ENCODE measurements at regions of chr2 and their contacts with region 1.

Region 1: GRCh38 chr2:120680136-120680761 is 55.4 kb upstream of the GLI2 start:
- DNase-seq: peak; percentile 87
- H3K4me3 Mint-ChIP-seq: no peak overlapping the region
- H3K27ac Mint-ChIP-seq: no peak overlapping the region
- H3K4me1 Mint-ChIP-seq: peaks cover 2% of the 10 kb centered on the region
- H3K27me3 Mint-ChIP-seq: peaks cover 15% of the 10 kb centered on the region

Region 2: DNA sequence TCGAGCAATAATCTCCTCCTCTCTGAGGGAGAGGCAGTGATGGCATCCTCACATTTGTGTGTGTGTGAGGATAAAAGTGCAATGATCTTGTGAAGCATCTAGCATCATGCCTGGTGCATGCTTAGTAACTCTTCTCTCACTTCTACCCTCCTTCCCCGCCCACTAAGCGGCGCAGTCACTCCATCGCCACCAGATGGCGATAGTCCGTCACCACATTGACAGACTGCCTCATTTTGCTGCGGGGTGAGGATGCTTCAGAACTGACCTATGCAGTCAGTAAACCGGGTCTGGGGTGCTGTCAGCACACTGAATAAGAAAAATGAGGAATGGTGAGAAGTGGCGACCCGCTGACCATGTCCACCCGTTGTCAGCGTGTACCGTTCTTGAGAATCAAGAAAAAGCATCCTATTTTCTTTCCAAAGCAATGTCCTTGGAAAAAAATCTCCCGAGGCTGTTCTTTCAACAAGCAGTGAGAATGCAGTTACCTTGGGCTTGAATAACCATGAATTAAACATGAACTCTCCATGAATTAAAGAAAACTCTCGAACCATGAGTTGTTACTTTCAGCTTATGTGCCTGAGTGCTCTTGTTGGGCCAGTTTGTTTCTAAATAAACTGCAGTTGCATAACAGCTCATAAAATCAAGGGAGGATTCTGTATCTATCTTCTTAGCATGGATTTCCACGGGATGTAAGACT is 1038.5 kb before region 1 on chr2:
- CTCF ChIA-PET with region 1: no interaction called
- intact Hi-C with region 1: loop called (anchors 1 kb)
- DNase-seq: peak; percentile 84
- H3K4me3 Mint-ChIP-seq: no peak overlapping the region
- H3K27ac Mint-ChIP-seq: no peak overlapping the region
- H3K4me1 Mint-ChIP-seq: peaks cover 1% of the 10 kb centered on the region
- H3K27me3 Mint-ChIP-seq: no peaks in the 10 kb centered on the region

Region 3: GRCh38 chr2:119753041-119753929 is 927.0 kb before region 1 on chr2:
- CTCF ChIA-PET with region 1: no interaction called
- intact Hi-C with region 1: loop called (anchors 5 kb)
- DNase-seq: peak; percentile 43
- H3K4me3 Mint-ChIP-seq: no peak overlapping the region
- H3K27ac Mint-ChIP-seq: no peak overlapping the region
- H3K4me1 Mint-ChIP-seq: peaks cover 14% of the 10 kb centered on the region
- H3K27me3 Mint-ChIP-seq: no peaks in the 10 kb centered on the region

Region 4: GRCh38 chr2:120231974-120232635 is 448.1 kb before region 1 on chr2:
- CTCF ChIA-PET with region 1: no interaction called
- intact Hi-C with region 1: loop called (anchors 5 kb)
- DNase-seq: peak; percentile 86
- H3K4me3 Mint-ChIP-seq: peak overlapping the region; percentile 82
- H3K27ac Mint-ChIP-seq: peak overlapping the region; percentile 94
- H3K4me1 Mint-ChIP-seq: peaks cover 47% of the 10 kb centered on the region
- H3K27me3 Mint-ChIP-seq: no peaks in the 10 kb centered on the region

Region 5: GRCh38 chr2:120320318-120320851 is 359.9 kb before region 1 on chr2:
- CTCF ChIA-PET with region 1: no interaction called
- intact Hi-C with region 1: no loop called
- DNase-seq: no peak
- H3K4me3 Mint-ChIP-seq: no peak overlapping the region
- H3K27ac Mint-ChIP-seq: no peak overlapping the region
- H3K4me1 Mint-ChIP-seq: peaks cover 4% of the 10 kb centered on the region
- H3K27me3 Mint-ChIP-seq: no peaks in the 10 kb centered on the region

Region 6: DNA sequence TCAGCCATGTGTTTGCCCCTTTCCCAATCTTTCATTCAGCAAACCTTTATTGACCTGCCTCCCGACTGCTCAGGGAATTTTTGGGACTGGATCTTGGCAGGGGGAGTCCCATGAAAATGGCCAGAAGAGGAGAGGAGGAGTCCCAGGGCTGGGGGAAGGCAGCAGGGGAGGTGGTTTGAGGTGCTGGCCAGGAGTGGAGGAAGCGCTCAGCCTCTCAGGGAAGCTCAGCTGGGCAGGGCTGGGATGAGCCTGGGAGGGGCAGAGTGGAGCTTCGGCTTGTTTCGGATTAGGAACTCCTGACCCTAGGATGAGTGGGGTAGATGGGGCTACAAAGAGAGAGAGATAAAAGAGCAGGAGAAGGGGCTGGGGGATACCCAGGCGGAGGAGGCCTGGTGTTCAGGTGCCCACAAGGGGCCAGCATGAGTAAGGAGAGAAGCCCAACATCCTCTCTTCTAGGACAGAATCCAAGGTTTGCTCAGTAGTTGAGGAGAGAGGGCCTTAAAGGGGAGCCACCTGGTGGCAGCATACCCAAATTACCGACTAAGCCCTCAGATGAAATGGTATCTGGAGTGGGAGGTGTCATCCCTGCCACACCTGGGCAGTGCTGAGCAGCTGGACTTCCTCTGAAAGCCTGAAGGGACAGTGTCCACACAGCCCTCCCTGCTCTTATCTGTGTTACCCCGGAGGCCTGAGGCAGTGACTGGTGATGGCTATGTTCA is 243.2 kb before region 1 on chr2:
- CTCF ChIA-PET with region 1: interaction called, 5 read pairs
- intact Hi-C with region 1: loop called (anchors 5 kb)
- DNase-seq: peak; percentile 50
- H3K4me3 Mint-ChIP-seq: no peak overlapping the region
- H3K27ac Mint-ChIP-seq: no peak overlapping the region
- H3K4me1 Mint-ChIP-seq: peaks cover 4% of the 10 kb centered on the region
- H3K27me3 Mint-ChIP-seq: peaks cover 10% of the 10 kb centered on the region

Region 7: DNA sequence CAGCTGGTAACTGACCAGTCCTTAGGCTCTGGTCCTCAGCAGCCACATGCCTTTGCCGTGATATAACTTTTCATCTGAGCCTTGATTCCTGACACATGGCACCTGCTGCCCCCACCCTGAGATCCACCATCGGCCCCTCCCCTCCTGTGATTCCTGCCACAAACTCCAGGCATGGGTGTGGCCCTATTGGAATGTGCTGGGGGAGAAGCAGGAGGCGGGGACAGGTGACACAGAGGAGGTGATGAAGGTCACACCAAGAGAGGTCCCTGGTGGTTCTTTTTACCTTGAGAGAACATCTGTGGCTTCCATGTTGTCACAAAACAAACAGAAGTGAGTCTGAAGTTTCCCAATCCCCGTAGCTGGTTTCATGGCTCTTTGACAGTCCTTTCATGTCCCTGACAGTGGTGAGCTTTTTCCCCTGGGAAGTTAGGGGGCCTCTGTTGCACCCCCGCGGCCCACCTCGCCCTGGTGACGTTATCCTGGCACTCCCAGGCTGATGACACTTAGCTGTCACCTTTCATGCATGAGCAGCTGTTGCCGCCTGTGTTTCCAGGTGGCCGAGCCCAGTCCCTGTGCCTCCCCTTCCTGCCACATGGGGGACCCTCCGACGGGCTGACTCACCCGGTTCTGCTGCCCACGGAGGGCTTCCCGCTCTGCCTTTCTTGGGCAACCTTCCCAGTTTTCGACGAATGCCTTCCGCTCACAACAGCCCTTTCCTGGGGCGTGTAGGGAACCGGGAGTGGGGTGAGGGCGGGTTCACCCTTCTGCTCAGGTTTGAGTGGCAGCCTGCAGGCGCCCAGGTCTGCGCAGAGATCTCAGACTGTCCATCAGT is 10.9 kb before region 1 on chr2:
- CTCF ChIA-PET with region 1: interaction called, 13 read pairs
- intact Hi-C with region 1: no loop called
- DNase-seq: peak; percentile 17
- H3K4me3 Mint-ChIP-seq: no peak overlapping the region
- H3K27ac Mint-ChIP-seq: no peak overlapping the region
- H3K4me1 Mint-ChIP-seq: no peaks in the 10 kb centered on the region
- H3K27me3 Mint-ChIP-seq: peaks cover 27% of the 10 kb centered on the region